ENCODE measurements at regions of chr2 and their contacts with region 1.

Region 1: GRCh38 chr2:195307751-195308150 is 349.3 kb upstream of the SLC39A10 start:
- DNase-seq: no peak
- H3K4me3 ChIP-seq: no peak overlapping the region
- CTCF ChIP-seq: no peak

Region 2: DNA sequence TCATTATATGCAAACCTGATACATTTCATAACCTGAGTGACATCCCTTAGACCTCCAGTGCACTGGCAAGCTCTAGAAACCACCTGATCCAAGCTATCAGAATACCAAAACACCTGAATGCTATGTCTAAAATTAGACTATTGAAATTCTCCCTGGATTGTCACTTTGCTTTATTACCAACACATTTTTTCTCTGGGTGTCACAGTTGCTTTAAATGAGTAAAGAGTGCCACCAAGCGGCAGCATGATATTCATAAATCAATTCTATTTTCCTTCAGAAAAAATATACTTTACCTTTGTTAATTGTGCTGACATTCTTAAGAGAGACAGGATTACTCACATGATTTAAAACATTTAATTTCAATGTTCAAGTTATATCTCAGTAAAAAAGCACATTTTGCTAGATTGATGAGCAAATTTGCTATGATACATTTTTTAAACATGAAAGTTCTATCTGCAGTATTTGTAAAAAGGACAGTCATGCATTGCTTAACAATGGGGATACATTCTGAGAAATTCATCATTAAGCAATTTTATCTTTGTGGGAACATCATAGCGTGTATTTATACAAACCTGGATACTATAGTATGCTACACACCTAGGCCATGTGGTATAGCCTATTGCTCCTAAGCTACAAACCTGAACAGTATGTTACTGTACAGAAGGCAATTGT is 10.8 kb after region 1 on chr2:
- CTCF ChIA-PET with region 1: interaction called, 23 read pairs
- POLR2A ChIA-PET with region 1: no interaction called
- DNase-seq: no peak
- H3K4me3 ChIP-seq: no peak overlapping the region
- CTCF ChIP-seq: peak; percentile 9

Measured in AG04449 (cell line).